Spleen (tissue), 13 donors: ENCODE measurements at regions of chr2 and their contacts with region 1.

Region 1: GRCh38 chr2:55519938-55520885 is 694 bp downstream of the CFAP36 start:
- DNase-seq: no peak
- H3K4me3 ChIP-seq: peak overlapping the region; percentile 82 to 97 (median 94)
- H3K27ac ChIP-seq: peak overlapping the region; percentile 1 to 95 (median 92)
- H3K4me1 ChIP-seq: peaks cover 6 to 30% (median 19%) of the 10 kb centered on the region in 6 donors
- H3K27me3 ChIP-seq: no peaks in the 10 kb centered on the region
- CTCF ChIP-seq: no peak
- POLR2A ChIP-seq: no peak

Region 2: GRCh38 chr2:55120634-55121359 is 399.4 kb before region 1 on chr2:
- intact Hi-C with region 1: no loop called
- DNase-seq: no peak
- H3K4me3 ChIP-seq: no peak overlapping the region
- H3K27ac ChIP-seq: peak overlapping the region in 5 of 8 donors; percentile 5 to 67 (median 44)
- H3K4me1 ChIP-seq: peaks cover 0 to 52% (median 20%) of the 10 kb centered on the region in 6 donors
- H3K27me3 ChIP-seq: no peaks in the 10 kb centered on the region
- CTCF ChIP-seq: no peak
- POLR2A ChIP-seq: no peak

Region 3: GRCh38 chr2:55419679-55420438 is 100.4 kb before region 1 on chr2 and contains the start of gene CCDC88A:
- intact Hi-C with region 1: loop called (anchors 10 kb)
- DNase-seq: peak; percentile 96
- H3K4me3 ChIP-seq: peak within 1 kb of the TSS; percentile 48 to 91 (median 70)
- H3K27ac ChIP-seq: peak within 1 kb of the TSS; percentile 83 to 94 (median 92)
- H3K4me1 ChIP-seq: peaks cover 10 to 63% (median 42%) of the 10 kb centered on the region in 6 donors
- H3K27me3 ChIP-seq: no peaks in the 10 kb centered on the region
- CTCF ChIP-seq: peak in 8 of 11 experiments; percentile 12 to 49 (median 24)
- POLR2A ChIP-seq: peak; percentile 27 to 89 (median 66)
- total RNA-seq, gene CCDC88A: 53.2 to 130 (median 95.3) TPM

Region 4: DNA sequence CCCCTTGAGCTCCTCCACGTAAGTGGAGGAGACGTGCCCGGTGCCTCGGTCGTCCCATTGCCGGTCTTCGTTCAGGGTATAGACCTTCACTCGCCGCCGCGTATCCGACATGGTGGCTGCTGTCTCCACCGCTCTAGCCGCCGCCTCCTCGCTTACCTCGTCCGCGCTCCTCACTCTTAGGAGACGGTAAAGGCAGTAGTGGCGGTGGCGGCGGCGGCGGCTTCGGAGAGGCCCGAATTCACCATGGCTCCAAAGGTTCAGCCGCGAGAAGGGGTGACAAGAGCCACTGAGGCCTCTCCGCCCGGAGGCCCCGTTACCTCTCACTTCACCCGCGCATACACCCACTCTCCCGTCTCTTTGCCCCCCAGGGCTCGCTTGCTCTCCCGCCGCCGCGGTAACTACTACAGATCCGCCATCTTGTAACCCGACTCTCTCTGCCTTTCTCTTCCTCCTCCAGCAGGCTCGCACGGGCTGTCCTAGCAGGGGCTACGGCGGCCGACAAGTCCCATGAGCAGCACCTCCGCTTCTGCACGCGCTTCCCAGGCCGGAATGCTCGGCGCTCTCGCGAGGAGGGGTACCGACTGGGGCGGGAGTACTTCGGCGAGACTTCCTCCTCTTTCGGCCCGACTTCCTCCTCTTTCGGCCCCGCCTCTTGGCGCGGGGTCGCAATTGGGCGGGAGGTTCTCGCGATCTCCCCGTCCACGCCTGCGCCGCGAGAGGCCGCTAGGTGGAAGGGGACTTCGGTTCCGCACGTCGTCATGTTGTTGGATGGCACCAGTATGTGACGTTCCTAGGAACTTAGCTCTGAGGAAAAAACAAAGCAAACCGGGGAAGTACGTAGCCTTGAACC is 97.2 kb after region 1 on chr2 and contains the start of gene PPP4R3B:
- intact Hi-C with region 1: loop called (anchors 10 kb)
- DNase-seq: peak; percentile 100
- H3K4me3 ChIP-seq: peak within 1 kb of the TSS; percentile 70 to 99 (median 90)
- H3K27ac ChIP-seq: peak within 1 kb of the TSS; percentile 93 to 99 (median 99)
- H3K4me1 ChIP-seq: peaks cover 47 to 81% (median 65%) of the 10 kb centered on the region in 6 donors
- H3K27me3 ChIP-seq: no peaks in the 10 kb centered on the region
- CTCF ChIP-seq: peak; percentile 55 to 97 (median 88)
- POLR2A ChIP-seq: peak; percentile 75 to 98 (median 93)
- total RNA-seq, gene PPP4R3B: 61.7 to 89.5 (median 77.7) TPM

Region 5: DNA sequence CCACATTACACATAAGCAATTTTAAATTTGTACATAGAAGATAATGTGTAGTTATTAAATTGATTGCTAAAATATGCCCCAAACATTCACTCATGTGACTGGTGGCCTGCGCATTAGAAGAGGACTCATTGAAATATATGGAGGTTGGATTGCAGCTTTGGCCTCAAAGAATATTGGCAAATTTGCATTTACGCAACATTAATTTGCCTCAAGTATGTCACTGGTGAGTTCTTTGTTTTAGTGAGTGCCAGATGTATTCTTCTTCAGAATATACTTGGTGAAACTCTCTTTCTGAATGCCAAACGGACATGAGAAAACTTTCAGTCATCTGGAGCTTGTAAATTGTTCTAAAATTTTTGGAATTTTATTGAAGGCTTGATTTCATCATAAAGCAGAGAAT is 409.3 kb after region 1 on chr2:
- intact Hi-C with region 1: no loop called
- DNase-seq: no peak
- H3K4me3 ChIP-seq: no peak overlapping the region
- H3K27ac ChIP-seq: no peak overlapping the region
- H3K4me1 ChIP-seq: no peaks in the 10 kb centered on the region
- H3K27me3 ChIP-seq: peaks cover 0 to 21% (median under 1%) of the 10 kb centered on the region in 7 donors
- CTCF ChIP-seq: no peak
- POLR2A ChIP-seq: no peak